Left lung (tissue), 14 donors: ENCODE measurements at regions of chr1 and their contacts with region 1.

Region 1: GRCh38 chr1:85307987-85308832 is 31.8 kb upstream of the BCL10 start:
- DNase-seq: peak; percentile 83 to 93 (median 90)
- ATAC-seq: peak; percentile 100
- H3K4me3 ChIP-seq: no peak overlapping the region
- H3K27ac ChIP-seq: no peak overlapping the region
- H3K4me1 ChIP-seq: peaks cover 3 to 7% of the 10 kb centered on the region in 2 donors
- H3K27me3 ChIP-seq: peaks cover 0 to 17% of the 10 kb centered on the region in 2 donors
- CTCF ChIP-seq: peak; percentile 87 to 96

Region 2: DNA sequence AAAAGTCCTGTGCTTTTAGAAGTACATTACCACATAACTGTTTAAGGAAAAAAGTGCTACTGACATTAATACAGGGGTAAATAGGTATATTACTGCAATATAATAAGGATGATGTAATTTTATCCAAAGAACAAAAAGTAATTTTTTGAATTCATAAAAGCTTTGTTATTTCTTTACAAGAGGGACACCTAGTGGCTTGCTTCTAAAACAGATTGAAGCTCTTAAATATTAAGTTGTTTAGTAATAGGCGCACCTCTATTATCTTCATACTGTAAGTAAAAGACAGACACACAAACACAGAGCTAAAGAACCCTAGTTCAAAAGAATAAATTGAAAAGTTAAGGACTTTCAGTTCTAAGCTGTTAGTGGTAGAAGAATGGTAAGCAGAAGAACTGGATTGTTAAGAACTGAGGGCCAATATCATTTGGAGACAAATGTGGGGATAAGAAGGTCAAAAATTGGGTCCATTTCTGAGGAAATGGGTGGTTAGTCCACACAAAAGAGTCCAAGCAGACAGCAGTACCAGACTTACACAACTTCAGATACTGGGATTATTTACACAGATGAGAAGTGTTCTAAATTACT is 384.6 kb after region 1 on chr1:
- intact Hi-C with region 1: loop called in 1 of 2 experiments (anchors 10 kb)
- DNase-seq: peak in 1 of 4 donors; percentile 44
- ATAC-seq: peak; percentile 58
- H3K4me3 ChIP-seq: no peak overlapping the region
- H3K27ac ChIP-seq: no peak overlapping the region
- H3K4me1 ChIP-seq: no peaks in the 10 kb centered on the region
- H3K27me3 ChIP-seq: no peaks in the 10 kb centered on the region
- CTCF ChIP-seq: peak in 1 of 2 donors; percentile 48